Endothelial cell of umbilical vein (primary cell): ENCODE measurements at regions of chr1 and their contacts with region 1.

Region 1: DNA sequence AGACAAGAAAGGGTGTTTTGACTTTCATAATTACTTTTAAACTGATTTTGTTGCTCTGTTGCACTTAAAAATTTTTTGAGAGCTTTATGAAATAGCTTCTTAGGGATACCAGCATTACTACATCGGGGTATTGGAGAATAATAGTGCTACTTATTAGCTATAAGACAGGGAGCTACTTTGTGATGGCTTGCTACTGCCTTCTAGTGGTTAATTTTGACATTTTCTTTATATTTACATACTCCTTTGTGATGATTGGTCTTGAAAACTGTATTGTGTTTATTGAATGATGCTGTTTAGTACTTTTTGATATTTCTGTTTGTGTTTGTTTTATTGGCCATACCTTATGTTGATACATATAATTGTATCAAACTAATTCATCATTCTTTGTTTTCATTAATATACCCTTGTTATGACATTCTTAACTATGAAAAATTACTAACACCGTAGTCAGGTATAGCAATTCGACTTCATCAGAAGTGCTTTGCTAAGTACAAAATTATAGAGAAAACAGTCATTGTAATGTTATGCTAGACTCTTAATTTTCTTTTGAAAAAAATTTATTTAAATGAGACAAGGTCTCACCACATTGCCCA is 85.5 kb downstream of the CLIC4 start:
- DNase-seq: peak; percentile 90
- H3K4me3 ChIP-seq: no peak overlapping the region
- H3K27ac ChIP-seq: no peak overlapping the region
- H3K4me1 ChIP-seq: peaks cover 30% of the 10 kb centered on the region
- H3K27me3 ChIP-seq: no peaks in the 10 kb centered on the region
- CTCF ChIP-seq: peak; percentile 42 to 45
- POLR2A ChIP-seq: no peak

Region 2: DNA sequence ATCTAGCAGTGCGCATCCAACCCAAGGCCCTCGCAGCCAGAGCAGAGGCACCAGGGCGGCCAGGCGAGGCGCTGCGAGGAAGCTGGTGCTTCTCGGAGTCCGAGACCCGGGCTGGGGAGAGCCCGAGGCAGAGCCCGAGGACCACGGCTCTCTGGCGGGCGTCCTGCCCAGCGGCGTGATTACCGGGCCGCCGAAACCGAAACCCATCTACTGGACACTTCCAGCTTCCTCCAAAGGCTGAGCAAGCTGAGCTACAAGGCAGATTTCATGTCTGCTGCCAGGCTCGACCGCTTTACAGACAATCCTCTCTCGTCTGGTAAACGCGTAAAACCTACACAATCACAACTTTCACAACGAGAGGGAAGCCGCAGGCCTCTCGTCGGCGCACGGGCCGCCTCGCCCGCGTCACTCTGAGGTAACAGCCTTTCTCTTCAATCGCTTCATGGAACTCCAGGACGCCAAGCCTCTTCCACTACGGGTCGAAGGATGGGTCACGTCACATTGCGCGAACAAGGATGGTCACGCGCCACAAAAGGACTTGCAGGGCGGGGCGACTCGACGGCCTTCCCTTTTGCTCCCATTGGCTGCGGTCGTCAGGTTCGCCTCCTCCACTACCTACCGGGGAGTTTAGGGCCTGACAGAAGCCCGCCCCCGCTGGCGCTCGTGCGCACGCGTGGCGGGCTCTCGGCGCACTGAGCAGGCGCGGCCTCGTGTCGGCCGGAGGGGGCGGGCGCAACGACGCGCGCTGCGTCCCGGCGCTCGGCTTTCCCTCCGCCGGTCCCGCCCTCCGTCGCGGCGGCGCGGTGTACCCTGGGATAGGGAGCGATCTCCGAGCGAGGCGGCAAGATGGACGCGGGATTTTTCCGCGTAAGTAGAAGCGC is 188.1 kb before region 1 on chr1 and contains the start of gene SRRM1:
- CTCF ChIA-PET with region 1: interaction called, 10 read pairs
- POLR2A ChIA-PET with region 1: no interaction called
- dilution Hi-C with region 1: no loop called
- intact Hi-C with region 1: no loop called
- DNase-seq: peak; percentile 100
- H3K4me3 ChIP-seq: peak within 1 kb of the TSS; percentile 81 to 100 (median 81)
- H3K27ac ChIP-seq: peak within 1 kb of the TSS; percentile 84
- H3K4me1 ChIP-seq: peaks cover 18% of the 10 kb centered on the region
- H3K27me3 ChIP-seq: peaks cover 0 to under 1% of the 10 kb centered on the region in 2 experiments
- CTCF ChIP-seq: no peak
- POLR2A ChIP-seq: peak; percentile 98
- total RNA-seq, gene SRRM1: 157 and 163 TPM in 2 replicates

Region 3: DNA sequence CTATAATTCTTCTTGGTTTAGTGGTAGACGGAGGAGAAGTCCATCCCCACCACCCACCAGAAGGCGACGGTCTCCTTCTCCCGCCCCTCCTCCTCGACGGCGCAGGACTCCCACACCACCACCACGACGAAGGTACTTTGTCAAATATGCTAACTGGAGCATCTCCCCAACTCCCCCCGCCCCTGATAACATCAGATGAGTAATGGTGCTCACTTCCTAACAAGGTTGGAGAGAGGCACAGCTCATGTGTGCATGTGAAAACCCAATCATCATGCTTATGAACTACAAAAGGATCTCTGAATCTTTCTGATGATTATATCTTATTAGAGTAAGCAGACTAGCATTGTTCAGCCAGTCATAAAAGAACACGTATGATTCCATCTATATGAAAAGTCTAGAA is 164.0 kb before region 1 on chr1:
- CTCF ChIA-PET with region 1: interaction called, 38 read pairs
- POLR2A ChIA-PET with region 1: interaction called, 13 read pairs
- dilution Hi-C with region 1: no loop called
- intact Hi-C with region 1: no loop called
- DNase-seq: no peak
- H3K4me3 ChIP-seq: no peak overlapping the region
- H3K27ac ChIP-seq: no peak overlapping the region
- H3K4me1 ChIP-seq: no peaks in the 10 kb centered on the region
- H3K27me3 ChIP-seq: no peaks in the 10 kb centered on the region
- CTCF ChIP-seq: no peak
- POLR2A ChIP-seq: no peak

Region 4: GRCh38 chr1:24727501-24728216 is 103.1 kb before region 1 on chr1:
- CTCF ChIA-PET with region 1: interaction called, 22 read pairs
- POLR2A ChIA-PET with region 1: interaction called, 3 read pairs
- dilution Hi-C with region 1: no loop called
- intact Hi-C with region 1: no loop called
- DNase-seq: no peak
- H3K4me3 ChIP-seq: no peak overlapping the region
- H3K27ac ChIP-seq: no peak overlapping the region
- H3K4me1 ChIP-seq: peaks cover 45% of the 10 kb centered on the region
- H3K27me3 ChIP-seq: no peaks in the 10 kb centered on the region
- CTCF ChIP-seq: no peak
- POLR2A ChIP-seq: no peak

Region 5: GRCh38 chr1:24754229-24754628 is 76.5 kb before region 1 on chr1:
- CTCF ChIA-PET with region 1: interaction called, 17 read pairs
- POLR2A ChIA-PET with region 1: no interaction called
- dilution Hi-C with region 1: no loop called
- intact Hi-C with region 1: loop called (anchors 2 kb)
- DNase-seq: peak; percentile 85
- H3K4me3 ChIP-seq: no peak overlapping the region
- H3K27ac ChIP-seq: peak overlapping the region; percentile 49
- H3K4me1 ChIP-seq: peaks cover 35% of the 10 kb centered on the region
- H3K27me3 ChIP-seq: no peaks in the 10 kb centered on the region
- CTCF ChIP-seq: no peak
- POLR2A ChIP-seq: no peak

Region 6: DNA sequence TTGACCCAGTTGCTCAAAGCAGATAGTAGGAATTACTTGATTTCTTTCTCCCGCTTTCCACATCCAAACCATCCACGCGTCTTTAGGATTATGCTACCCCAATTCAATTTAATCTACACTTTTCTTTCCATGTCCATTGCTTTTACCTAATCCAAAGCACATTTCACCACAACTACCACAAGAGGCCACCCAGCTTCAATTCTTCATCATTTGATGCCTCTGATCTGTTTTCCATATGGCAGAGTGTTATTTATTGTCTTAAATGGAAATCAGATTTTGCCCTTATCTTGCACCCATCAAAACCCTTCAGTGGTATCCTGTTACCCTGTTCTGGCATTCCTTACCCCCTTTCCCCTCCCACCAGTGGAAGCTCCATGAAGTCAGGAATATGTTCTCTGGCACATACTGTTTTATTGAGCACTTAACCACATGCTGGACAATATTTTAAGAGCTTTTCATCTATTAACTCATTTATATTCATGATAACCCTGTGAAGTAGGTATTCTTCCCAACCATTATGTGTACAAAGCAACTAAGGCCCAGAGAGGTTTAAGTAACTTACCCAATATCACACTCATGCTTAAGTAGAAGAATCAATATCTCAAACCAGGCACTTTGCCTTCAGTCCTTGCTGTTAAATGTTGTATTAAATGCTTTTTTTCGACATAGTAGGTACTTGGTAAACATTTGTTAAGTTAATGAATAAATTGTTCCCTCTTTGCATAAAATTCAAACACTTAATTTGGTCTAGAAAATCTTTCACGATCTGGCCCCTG is 50.9 kb before region 1 on chr1:
- CTCF ChIA-PET with region 1: interaction called, 19 read pairs
- POLR2A ChIA-PET with region 1: no interaction called
- dilution Hi-C with region 1: no loop called
- intact Hi-C with region 1: no loop called
- DNase-seq: no peak
- H3K4me3 ChIP-seq: no peak overlapping the region
- H3K27ac ChIP-seq: no peak overlapping the region
- H3K4me1 ChIP-seq: peaks cover 2% of the 10 kb centered on the region
- H3K27me3 ChIP-seq: no peaks in the 10 kb centered on the region
- CTCF ChIP-seq: no peak
- POLR2A ChIP-seq: no peak